ENCODE measurements at regions of chr17 and their contacts with region 1.

Region 1: GRCh38 chr17:64326395-64327054 is 63.5 kb upstream of the TEX2 start:
- DNase-seq: peak in 3 of 4 donors; percentile 35 to 78 (median 38)
- ATAC-seq: peak; percentile 63
- H3K4me3 ChIP-seq: no peak overlapping the region
- H3K27ac ChIP-seq: peak overlapping the region in 2 of 4 donors; percentile 23 to 50
- H3K4me1 ChIP-seq: no peaks in the 10 kb centered on the region
- H3K27me3 ChIP-seq: no peaks in the 10 kb centered on the region
- CTCF ChIP-seq: no peak
- POLR2A ChIP-seq: peak in 1 of 3 donors; percentile 13

Region 2: GRCh38 chr17:64218066-64218465 is 108.5 kb before region 1 on chr17:
- intact Hi-C with region 1: no loop called
- DNase-seq: no peak
- ATAC-seq: no peak
- H3K4me3 ChIP-seq: no peak overlapping the region
- H3K27ac ChIP-seq: peak overlapping the region in 1 of 4 donors; percentile 67
- H3K4me1 ChIP-seq: peaks cover 54% of the 10 kb centered on the region
- H3K27me3 ChIP-seq: no peaks in the 10 kb centered on the region
- CTCF ChIP-seq: no peak
- POLR2A ChIP-seq: no peak

Region 3: DNA sequence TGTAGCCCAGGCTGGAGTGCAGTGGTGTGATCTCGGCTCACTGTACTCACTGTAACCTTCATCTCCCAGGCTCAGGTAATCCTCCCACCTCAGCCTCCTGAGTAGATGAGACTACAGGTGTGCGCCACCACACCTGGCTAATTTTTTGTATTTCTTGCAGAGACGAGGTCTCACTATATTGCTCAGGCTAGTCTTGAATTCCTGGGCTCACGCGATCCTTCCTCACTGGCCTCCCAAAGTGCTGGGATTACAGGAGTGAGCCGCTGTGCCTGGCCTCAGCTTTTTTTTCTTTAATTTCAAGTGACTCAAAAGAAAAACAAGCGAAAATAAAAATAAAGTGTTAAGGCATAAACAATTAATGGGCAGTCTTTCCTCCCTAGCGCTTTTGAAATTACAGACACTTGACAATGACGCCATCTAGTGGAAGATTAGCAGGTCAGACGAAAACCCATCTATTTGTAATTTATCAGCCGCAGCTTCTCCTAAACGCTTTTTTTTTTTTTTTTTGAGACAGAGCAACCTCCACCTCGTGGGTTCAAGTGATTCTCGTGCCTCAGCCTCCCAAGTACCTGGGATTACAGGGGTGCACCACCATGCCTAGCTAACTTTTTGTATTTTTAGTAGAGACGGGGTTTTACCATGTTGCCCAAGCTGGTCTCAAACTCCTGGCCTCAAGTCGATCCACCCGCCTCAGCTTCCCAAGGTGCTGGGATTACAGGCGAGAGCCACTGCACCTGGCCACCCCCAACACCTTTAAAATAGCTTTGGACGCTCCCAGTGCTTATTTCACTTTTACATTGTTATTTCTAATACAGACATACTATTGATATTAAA is 92.2 kb after region 1 on chr17:
- intact Hi-C with region 1: loop called (anchors 5 kb)
- DNase-seq: peak in 1 of 4 donors; percentile 31
- ATAC-seq: no peak
- H3K4me3 ChIP-seq: no peak overlapping the region
- H3K27ac ChIP-seq: no peak overlapping the region
- H3K4me1 ChIP-seq: no peaks in the 10 kb centered on the region
- H3K27me3 ChIP-seq: no peaks in the 10 kb centered on the region
- CTCF ChIP-seq: peak; percentile 64 to 82 (median 78)
- POLR2A ChIP-seq: no peak